ENCODE measurements at regions of chr5 and their contacts with region 1.

Region 1: GRCh38 chr5:90932052-90932699 is 373.6 kb downstream of the ADGRV1 start:
- DNase-seq: peak; percentile 70
- ATAC-seq: peak; percentile 77
- H3K4me3 ChIP-seq: no peak overlapping the region
- H3K27ac ChIP-seq: no peak overlapping the region
- H3K4me1 ChIP-seq: peaks cover 1% of the 10 kb centered on the region; the same call in 1 of the 2 replicates
- H3K27me3 ChIP-seq: no peaks in the 10 kb centered on the region
- CTCF ChIP-seq: peak; percentile 90
- POLR2A ChIP-seq: no peak
- RAD21 ChIP-seq: peak; percentile 87

Region 2: GRCh38 chr5:90718387-90718786 is 213.8 kb before region 1 on chr5:
- CTCF ChIA-PET with region 1: no interaction called
- POLR2A ChIA-PET with region 1: no interaction called
- dilution Hi-C with region 1: no loop called
- in situ Hi-C with region 1: no loop called
- intact Hi-C with region 1: no loop called
- DNase-seq: no peak
- ATAC-seq: no peak
- H3K4me3 ChIP-seq: no peak overlapping the region
- H3K27ac ChIP-seq: no peak overlapping the region
- H3K4me1 ChIP-seq: no peaks in the 10 kb centered on the region
- H3K27me3 ChIP-seq: no peaks in the 10 kb centered on the region
- CTCF ChIP-seq: no peak
- POLR2A ChIP-seq: no peak
- RAD21 ChIP-seq: no peak

Region 3: GRCh38 chr5:90866333-90866732 is 65.8 kb before region 1 on chr5:
- CTCF ChIA-PET with region 1: interaction called, 3 read pairs
- POLR2A ChIA-PET with region 1: no interaction called
- dilution Hi-C with region 1: no loop called
- in situ Hi-C with region 1: no loop called
- intact Hi-C with region 1: loop called (anchors 2 kb)
- DNase-seq: peak; percentile 28
- ATAC-seq: peak; percentile 70
- H3K4me3 ChIP-seq: no peak overlapping the region
- H3K27ac ChIP-seq: no peak overlapping the region
- H3K4me1 ChIP-seq: no peaks in the 10 kb centered on the region; the same call in 1 of the 2 replicates
- H3K27me3 ChIP-seq: no peaks in the 10 kb centered on the region
- CTCF ChIP-seq: peak; percentile 60
- POLR2A ChIP-seq: no peak
- RAD21 ChIP-seq: peak; percentile 54

Region 4: GRCh38 chr5:90916947-90917800 is 15.0 kb before region 1 on chr5:
- CTCF ChIA-PET with region 1: interaction called, 11 read pairs
- POLR2A ChIA-PET with region 1: no interaction called
- dilution Hi-C with region 1: no loop called
- in situ Hi-C with region 1: no loop called
- intact Hi-C with region 1: no loop called
- DNase-seq: no peak
- ATAC-seq: no peak
- H3K4me3 ChIP-seq: no peak overlapping the region
- H3K27ac ChIP-seq: no peak overlapping the region
- H3K4me1 ChIP-seq: no peaks in the 10 kb centered on the region
- H3K27me3 ChIP-seq: no peaks in the 10 kb centered on the region
- CTCF ChIP-seq: no peak
- POLR2A ChIP-seq: no peak
- RAD21 ChIP-seq: no peak

Region 5: DNA sequence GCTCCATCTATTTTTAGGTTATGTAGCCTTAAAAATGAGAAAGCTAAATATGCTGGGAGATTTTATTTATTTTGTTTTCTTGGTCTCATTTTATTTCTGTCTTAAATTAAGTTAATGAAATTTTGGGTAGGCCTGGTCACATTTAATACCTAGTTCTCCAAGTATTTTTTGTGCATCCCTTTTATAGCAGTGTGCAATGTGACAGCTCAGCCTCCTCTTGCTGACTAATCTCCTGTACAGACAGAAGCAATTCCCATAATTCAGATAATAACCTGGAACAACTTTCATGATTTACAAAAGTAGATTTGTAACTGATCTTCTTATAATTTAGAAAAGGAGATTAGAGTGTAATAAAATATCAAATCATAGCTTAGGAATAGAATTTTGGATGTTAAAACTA is 30.3 kb after region 1 on chr5:
- CTCF ChIA-PET with region 1: no interaction called
- POLR2A ChIA-PET with region 1: no interaction called
- dilution Hi-C with region 1: no loop called
- in situ Hi-C with region 1: no loop called
- intact Hi-C with region 1: no loop called
- DNase-seq: no peak
- ATAC-seq: no peak
- H3K4me3 ChIP-seq: no peak overlapping the region
- H3K27ac ChIP-seq: no peak overlapping the region
- H3K4me1 ChIP-seq: no peaks in the 10 kb centered on the region
- H3K27me3 ChIP-seq: no peaks in the 10 kb centered on the region
- CTCF ChIP-seq: no peak
- POLR2A ChIP-seq: no peak
- RAD21 ChIP-seq: no peak

Region 6: GRCh38 chr5:91101600-91102379 is 169.6 kb after region 1 on chr5:
- CTCF ChIA-PET with region 1: no interaction called
- POLR2A ChIA-PET with region 1: no interaction called
- dilution Hi-C with region 1: no loop called
- in situ Hi-C with region 1: loop called (anchors 10 kb)
- intact Hi-C with region 1: loop called (anchors 1 kb)
- DNase-seq: peak; percentile 84
- ATAC-seq: peak; percentile 100
- H3K4me3 ChIP-seq: no peak overlapping the region
- H3K27ac ChIP-seq: no peak overlapping the region
- H3K4me1 ChIP-seq: no peaks in the 10 kb centered on the region
- H3K27me3 ChIP-seq: no peaks in the 10 kb centered on the region
- CTCF ChIP-seq: peak; percentile 91
- POLR2A ChIP-seq: 0 out of 2 replicates have a peak, but pooled peaks have one; percentile 50
- RAD21 ChIP-seq: peak; percentile 98

Region 7: GRCh38 chr5:91280362-91281269 is 348.4 kb after region 1 on chr5:
- CTCF ChIA-PET with region 1: no interaction called
- POLR2A ChIA-PET with region 1: no interaction called
- dilution Hi-C with region 1: no loop called
- in situ Hi-C with region 1: no loop called
- intact Hi-C with region 1: loop called (anchors 10 kb)
- DNase-seq: peak; percentile 99
- ATAC-seq: peak; percentile 88
- H3K4me3 ChIP-seq: peak overlapping the region; percentile 48
- H3K27ac ChIP-seq: peak overlapping the region; percentile 98
- H3K4me1 ChIP-seq: peaks cover 16% of the 10 kb centered on the region
- H3K27me3 ChIP-seq: no peaks in the 10 kb centered on the region
- CTCF ChIP-seq: no peak; the same call in 1 of the 2 replicates
- POLR2A ChIP-seq: peak; percentile 94
- RAD21 ChIP-seq: peak; percentile 37; the same call in 1 of the 2 replicates

Region 8: DNA sequence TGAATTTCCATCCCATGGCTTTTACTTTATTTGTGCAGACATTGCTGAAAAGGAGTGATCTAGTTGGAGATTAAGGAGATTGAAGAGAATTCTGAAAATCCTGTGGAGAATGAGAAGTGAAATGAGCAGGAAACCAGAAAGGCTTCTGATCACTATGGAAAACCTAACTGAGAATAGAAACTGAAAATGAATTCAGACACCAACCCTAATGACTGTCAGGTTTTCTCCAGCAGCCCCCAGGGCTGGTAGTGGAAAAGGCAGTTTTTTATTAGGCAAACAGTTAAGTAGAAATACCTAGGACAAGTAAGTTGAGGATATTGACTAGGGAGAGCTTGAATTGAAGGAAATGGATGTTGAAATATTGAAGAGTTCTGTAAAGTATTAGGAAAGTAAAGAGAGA is 465.6 kb after region 1 on chr5:
- CTCF ChIA-PET with region 1: interaction called, 5 read pairs
- POLR2A ChIA-PET with region 1: no interaction called
- dilution Hi-C with region 1: no loop called
- in situ Hi-C with region 1: loop called (anchors 5 kb)
- intact Hi-C with region 1: no loop called
- DNase-seq: no peak
- ATAC-seq: no peak
- H3K4me3 ChIP-seq: no peak overlapping the region
- H3K27ac ChIP-seq: no peak overlapping the region
- H3K4me1 ChIP-seq: no peaks in the 10 kb centered on the region
- H3K27me3 ChIP-seq: no peaks in the 10 kb centered on the region
- CTCF ChIP-seq: no peak
- POLR2A ChIP-seq: no peak
- RAD21 ChIP-seq: no peak

Region 9: DNA sequence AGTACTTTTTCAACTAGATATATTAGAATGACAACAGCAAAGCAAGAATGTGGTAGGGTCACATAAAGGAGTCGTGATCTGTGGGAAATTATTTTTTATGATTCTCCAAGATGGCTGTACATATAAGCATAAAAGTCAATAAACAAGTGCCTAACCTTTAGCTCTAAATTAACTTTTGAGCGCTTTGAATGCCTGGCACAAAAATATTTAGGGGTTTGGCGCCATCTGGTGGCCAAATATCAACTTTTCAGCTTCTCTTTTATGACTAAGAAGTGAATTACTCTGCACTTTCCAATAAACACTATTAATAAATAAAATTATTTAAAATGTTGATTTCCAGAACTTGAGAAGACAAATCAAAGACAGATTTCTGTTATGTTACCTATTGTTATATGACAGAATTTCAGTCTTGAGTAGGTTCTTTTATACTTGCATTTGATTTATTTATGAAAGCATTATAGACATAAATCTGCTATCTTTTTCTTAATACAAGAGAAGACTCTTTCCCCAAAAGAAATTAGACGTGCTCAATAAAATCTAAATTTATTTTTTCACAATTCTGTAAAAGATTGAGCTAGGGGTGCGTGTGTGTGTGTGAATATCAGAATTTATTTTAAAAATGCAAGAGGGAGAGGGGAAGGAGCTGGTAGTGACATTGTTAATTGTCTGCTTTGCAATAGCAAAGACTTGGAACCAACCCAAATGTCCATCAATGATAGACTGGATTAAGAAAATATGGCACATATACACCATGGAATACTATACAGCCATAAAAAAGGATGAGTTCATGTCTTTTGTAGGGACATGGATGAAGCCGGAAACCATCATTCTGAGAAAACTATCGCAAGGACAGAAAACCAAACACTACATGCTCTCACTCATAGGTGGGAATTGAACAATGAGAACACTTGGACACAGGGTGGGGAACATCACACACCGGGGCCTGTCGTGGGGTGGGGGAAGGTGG is 487.7 kb after region 1 on chr5:
- CTCF ChIA-PET with region 1: interaction called, 15 read pairs
- POLR2A ChIA-PET with region 1: no interaction called
- dilution Hi-C with region 1: no loop called
- in situ Hi-C with region 1: no loop called
- intact Hi-C with region 1: loop called (anchors 1 kb)
- DNase-seq: peak; percentile 55
- ATAC-seq: peak; percentile 50
- H3K4me3 ChIP-seq: no peak overlapping the region
- H3K27ac ChIP-seq: no peak overlapping the region
- H3K4me1 ChIP-seq: no peaks in the 10 kb centered on the region
- H3K27me3 ChIP-seq: no peaks in the 10 kb centered on the region
- CTCF ChIP-seq: peak; percentile 73
- POLR2A ChIP-seq: no peak
- RAD21 ChIP-seq: peak; percentile 76